CD8-positive, alpha-beta T cell (primary cell): ENCODE measurements at regions of chr12 and their contacts with region 1.

Region 1: GRCh38 chr12:121793838-121794533 is 498 bp upstream of the RHOF start:
- DNase-seq: peak; percentile 93 to 98 (median 95)
- ATAC-seq: peak; percentile 48
- H3K4me3 ChIP-seq: peak overlapping the region; percentile 93
- H3K4me3 Mint-ChIP-seq: peak overlapping the region; percentile 89
- H3K27ac ChIP-seq: peak overlapping the region; percentile 70 to 99
- H3K27ac Mint-ChIP-seq: peak overlapping the region; percentile 98
- H3K4me1 ChIP-seq: peaks cover 60% of the 10 kb centered on the region
- H3K4me1 Mint-ChIP-seq: peaks cover 66% of the 10 kb centered on the region
- H3K27me3 ChIP-seq: no peaks in the 10 kb centered on the region
- H3K27me3 Mint-ChIP-seq: no peaks in the 10 kb centered on the region
- CTCF ChIP-seq: peak; percentile 97

Region 2: GRCh38 chr12:121279507-121279915 is 514.5 kb before region 1 on chr12:
- CTCF ChIA-PET with region 1: no interaction called
- POLR2A ChIA-PET with region 1: no interaction called
- intact Hi-C with region 1: no loop called
- DNase-seq: no peak
- ATAC-seq: no peak
- H3K4me3 ChIP-seq: no peak overlapping the region
- H3K4me3 Mint-ChIP-seq: no peak overlapping the region
- H3K27ac ChIP-seq: no peak overlapping the region
- H3K27ac Mint-ChIP-seq: no peak overlapping the region
- H3K4me1 ChIP-seq: no peaks in the 10 kb centered on the region
- H3K4me1 Mint-ChIP-seq: no peaks in the 10 kb centered on the region
- H3K27me3 ChIP-seq: no peaks in the 10 kb centered on the region
- H3K27me3 Mint-ChIP-seq: no peaks in the 10 kb centered on the region
- CTCF ChIP-seq: no peak

Region 3: DNA sequence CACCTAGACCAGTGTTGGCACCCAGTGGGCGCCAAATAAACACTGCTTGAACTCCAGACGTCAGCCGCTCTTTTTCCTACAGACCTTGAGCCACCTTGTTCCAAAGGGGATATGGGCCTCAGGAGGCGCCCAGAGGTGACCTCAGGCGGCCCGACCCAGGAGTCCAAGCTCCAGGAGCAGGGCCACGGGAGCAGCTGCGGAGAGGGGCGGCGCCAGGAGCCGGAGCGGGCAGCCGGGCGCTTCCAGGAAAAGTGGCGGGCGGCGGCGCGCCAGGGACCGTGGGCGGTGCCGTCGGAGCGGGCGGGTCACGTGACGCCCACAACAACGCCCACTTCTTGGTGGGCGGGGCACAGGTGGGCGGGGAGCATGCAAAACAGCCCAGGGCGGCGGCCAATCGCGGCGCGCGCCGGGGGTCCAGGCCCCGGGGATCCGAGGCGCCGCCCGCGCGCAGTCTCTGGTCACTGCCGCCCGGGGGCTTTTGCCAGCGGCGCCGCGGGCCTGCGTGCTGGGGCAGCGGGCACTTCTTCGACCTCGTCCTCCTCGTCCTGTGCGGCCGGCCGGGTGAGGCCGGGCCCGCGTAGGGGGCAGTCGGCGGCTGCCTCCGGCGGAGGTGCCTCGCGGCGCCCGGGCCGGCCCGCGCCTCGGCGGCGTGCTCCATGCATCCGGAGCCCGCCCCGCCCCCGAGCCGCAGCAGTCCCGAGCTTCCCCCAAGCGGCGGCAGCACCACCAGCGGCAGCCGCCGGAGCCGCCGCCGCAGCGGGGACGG is 167.7 kb before region 1 on chr12 and contains the start of gene ORAI1:
- CTCF ChIA-PET with region 1: interaction called, 5 read pairs
- POLR2A ChIA-PET with region 1: interaction called, 8 read pairs
- intact Hi-C with region 1: loop called in 1 of 2 experiments (anchors 5 kb)
- DNase-seq: peak; percentile 91 to 98 (median 96)
- ATAC-seq: peak; percentile 67
- H3K4me3 ChIP-seq: peak within 1 kb of the TSS; percentile 69 to 70
- H3K4me3 Mint-ChIP-seq: peak within 1 kb of the TSS; percentile 94
- H3K27ac ChIP-seq: peak within 1 kb of the TSS; percentile 73 to 89
- H3K27ac Mint-ChIP-seq: peak within 1 kb of the TSS; percentile 97
- H3K4me1 ChIP-seq: peaks cover 44% of the 10 kb centered on the region
- H3K4me1 Mint-ChIP-seq: peaks cover 46% of the 10 kb centered on the region
- H3K27me3 ChIP-seq: no peaks in the 10 kb centered on the region
- H3K27me3 Mint-ChIP-seq: no peaks in the 10 kb centered on the region
- CTCF ChIP-seq: no peak
- total RNA-seq, gene ORAI1: 59.0 to 62.1 TPM

Region 4: DNA sequence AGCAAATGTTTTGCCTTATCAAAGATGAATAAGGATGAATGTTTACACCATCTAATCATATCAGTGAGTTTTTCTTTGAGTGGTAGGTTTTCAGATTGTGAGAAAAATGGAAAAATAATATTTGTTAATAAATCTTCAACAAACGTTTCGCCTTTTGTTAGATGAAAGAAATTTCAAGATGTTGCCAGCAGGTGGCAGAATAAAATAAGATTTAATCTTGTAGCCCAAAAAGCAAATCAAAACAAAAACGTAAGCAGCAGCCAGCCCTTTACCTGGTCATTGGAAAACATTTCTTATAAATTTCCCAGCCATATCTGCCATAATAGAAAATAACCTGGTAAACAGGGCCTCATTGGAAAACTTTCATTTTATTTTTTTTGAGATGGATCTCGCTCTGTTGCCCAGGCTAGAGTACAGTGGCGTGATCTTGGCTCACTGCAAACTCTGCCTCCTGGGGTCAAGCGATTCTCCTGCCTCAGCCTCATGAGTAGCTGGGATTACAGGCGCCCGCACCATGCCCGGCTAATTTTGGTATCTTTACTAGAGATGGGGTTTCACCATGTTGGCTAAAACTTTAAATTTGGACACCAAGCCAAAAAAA is 96.8 kb before region 1 on chr12:
- CTCF ChIA-PET with region 1: interaction called, 31 read pairs
- POLR2A ChIA-PET with region 1: interaction called, 5 read pairs
- intact Hi-C with region 1: loop called (anchors 1 kb)
- DNase-seq: peak in 4 of 9 experiments; percentile 18 to 76 (median 59)
- ATAC-seq: peak; percentile 51
- H3K4me3 ChIP-seq: no peak overlapping the region
- H3K4me3 Mint-ChIP-seq: no peak overlapping the region
- H3K27ac ChIP-seq: no peak overlapping the region
- H3K27ac Mint-ChIP-seq: no peak overlapping the region
- H3K4me1 ChIP-seq: no peaks in the 10 kb centered on the region
- H3K4me1 Mint-ChIP-seq: peaks cover 2% of the 10 kb centered on the region
- H3K27me3 ChIP-seq: no peaks in the 10 kb centered on the region
- H3K27me3 Mint-ChIP-seq: no peaks in the 10 kb centered on the region
- CTCF ChIP-seq: peak; percentile 68

Region 5: DNA sequence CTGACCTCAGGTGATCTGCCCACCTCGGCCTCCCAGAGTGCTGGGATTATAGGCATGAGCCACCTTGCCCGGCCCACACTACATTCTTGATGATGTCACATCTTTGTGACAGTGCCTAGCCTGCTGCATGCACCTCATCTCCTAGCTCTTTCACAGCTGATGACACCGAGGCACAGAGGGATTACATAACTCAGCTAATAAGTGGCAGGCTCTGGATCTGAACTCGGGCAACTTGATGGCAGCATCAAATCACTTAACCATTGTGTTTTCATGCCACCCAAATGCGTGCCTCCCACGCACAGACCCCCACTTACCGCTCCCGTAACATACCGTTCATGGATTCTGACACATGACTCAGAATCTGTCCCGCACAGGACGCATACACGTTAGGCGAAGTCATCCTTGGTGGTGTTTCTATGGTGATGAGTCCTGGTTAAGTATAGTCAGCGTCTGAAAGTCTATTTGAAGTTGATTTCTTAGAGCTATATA is 74.0 kb before region 1 on chr12:
- CTCF ChIA-PET with region 1: interaction called, 29 read pairs
- POLR2A ChIA-PET with region 1: no interaction called
- intact Hi-C with region 1: no loop called
- DNase-seq: no peak
- ATAC-seq: no peak
- H3K4me3 ChIP-seq: no peak overlapping the region
- H3K4me3 Mint-ChIP-seq: no peak overlapping the region
- H3K27ac ChIP-seq: no peak overlapping the region
- H3K27ac Mint-ChIP-seq: no peak overlapping the region
- H3K4me1 ChIP-seq: no peaks in the 10 kb centered on the region
- H3K4me1 Mint-ChIP-seq: peaks cover 10% of the 10 kb centered on the region
- H3K27me3 ChIP-seq: no peaks in the 10 kb centered on the region
- H3K27me3 Mint-ChIP-seq: no peaks in the 10 kb centered on the region
- CTCF ChIP-seq: no peak

Region 6: DNA sequence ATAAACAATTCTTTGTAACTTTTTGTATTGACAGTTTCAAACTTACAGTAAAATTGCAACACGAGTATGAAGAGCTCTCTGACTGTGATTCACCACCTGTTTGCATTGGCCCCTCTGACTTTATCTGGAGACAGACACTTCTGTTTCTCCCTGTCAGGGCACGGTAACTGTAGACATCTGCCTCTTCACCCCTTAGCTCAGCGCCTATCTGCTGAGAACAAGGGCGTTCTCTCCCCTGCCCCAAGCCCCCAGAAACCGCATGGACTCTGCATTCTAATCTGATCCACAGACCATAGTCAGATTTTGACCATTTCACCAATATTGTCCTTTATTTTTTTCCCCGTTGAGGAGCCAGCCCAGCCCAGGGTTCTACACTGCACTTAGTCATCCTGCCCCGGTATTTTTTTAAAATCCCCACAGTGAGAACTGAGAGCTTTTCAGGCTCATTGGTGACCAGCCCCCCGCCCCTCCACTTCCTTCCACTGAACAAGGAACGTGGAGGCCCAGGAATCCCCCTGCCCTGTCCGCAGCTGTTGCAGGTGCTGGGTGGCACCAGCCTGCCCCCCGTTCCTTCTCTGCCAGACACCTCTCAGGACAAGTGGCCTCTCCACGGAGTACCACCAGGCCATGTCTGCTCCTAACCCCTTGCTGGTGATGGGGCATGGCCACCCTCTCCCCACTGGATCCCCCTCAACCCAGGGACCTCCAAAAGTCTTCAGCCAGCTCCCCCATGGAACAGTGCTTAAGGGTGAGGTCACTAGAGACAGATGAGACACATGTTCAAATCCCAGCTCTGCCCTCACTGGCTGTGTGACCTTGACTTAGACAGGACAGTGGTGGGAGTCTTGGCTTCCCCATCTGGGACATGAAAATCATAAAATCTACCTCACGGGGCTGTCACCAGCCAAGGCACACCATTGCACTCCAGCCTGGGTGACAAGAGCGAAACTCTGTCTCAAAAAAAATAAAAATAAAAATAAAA is 11.7 kb before region 1 on chr12:
- CTCF ChIA-PET with region 1: interaction called, 2,042 read pairs
- POLR2A ChIA-PET with region 1: interaction called, 1,016 read pairs
- intact Hi-C with region 1: no loop called
- DNase-seq: peak in 4 of 9 experiments; percentile 56 to 80 (median 69)
- ATAC-seq: peak; percentile 53
- H3K4me3 ChIP-seq: peak overlapping the region; percentile 13 to 19
- H3K4me3 Mint-ChIP-seq: peak overlapping the region; percentile 75
- H3K27ac ChIP-seq: peak overlapping the region; percentile 34 to 76
- H3K27ac Mint-ChIP-seq: peak overlapping the region; percentile 97
- H3K4me1 ChIP-seq: peaks cover 67% of the 10 kb centered on the region
- H3K4me1 Mint-ChIP-seq: peaks cover 57% of the 10 kb centered on the region
- H3K27me3 ChIP-seq: no peaks in the 10 kb centered on the region
- H3K27me3 Mint-ChIP-seq: no peaks in the 10 kb centered on the region
- CTCF ChIP-seq: no peak

Region 7: DNA sequence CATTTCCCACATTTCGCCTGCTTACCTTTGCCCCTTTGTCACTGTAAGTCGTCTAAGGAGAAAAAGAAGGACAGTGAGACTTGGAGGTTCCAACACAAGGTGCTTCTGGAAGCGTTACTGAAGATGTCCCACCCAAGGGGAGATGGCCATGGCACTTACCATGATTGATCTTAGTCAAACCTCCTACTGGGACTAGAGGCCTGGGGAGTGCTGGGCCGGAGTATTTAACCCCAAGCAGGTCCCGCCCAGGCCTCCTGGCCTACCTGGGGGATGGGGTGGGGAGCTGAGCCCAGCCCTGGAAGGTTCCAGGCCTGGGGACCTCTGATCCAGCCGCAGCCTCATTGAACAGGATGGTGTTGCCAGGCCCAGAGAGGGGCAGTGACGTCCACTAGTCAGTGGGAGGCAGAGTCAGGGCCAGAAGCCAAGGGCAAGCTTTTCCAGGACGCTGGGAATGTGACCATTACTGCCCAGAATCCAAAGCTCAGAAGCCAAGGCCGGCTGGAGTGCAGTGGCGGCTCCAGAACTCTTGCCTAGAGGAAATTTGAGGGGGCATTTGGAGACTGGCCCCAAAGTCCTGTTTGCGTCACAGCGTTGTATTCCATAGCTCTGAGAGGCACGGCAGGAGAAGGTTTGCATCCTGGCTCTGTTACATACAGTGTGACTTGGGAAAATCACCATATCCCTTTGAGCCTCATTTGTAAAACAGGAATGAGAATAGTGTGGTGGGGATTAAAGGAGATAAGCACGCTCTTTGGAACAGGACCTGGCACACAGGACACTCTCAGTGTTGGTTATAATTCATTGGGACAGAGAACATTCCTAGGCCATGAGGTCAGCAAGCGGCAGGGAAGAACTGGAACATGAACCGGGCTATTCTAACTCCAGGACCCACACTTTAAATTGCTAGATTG is 64.9 kb after region 1 on chr12 and contains the start of gene HPD:
- CTCF ChIA-PET with region 1: no interaction called
- POLR2A ChIA-PET with region 1: no interaction called
- intact Hi-C with region 1: no loop called
- DNase-seq: no peak
- ATAC-seq: no peak
- H3K4me3 ChIP-seq: no peak within 1 kb of the TSS
- H3K4me3 Mint-ChIP-seq: no peak within 1 kb of the TSS
- H3K27ac ChIP-seq: no peak within 1 kb of the TSS
- H3K27ac Mint-ChIP-seq: no peak within 1 kb of the TSS
- H3K4me1 ChIP-seq: no peaks in the 10 kb centered on the region
- H3K4me1 Mint-ChIP-seq: no peaks in the 10 kb centered on the region
- H3K27me3 ChIP-seq: no peaks in the 10 kb centered on the region
- H3K27me3 Mint-ChIP-seq: no peaks in the 10 kb centered on the region
- CTCF ChIP-seq: no peak
- total RNA-seq, gene HPD: not detected

Region 8: GRCh38 chr12:121888478-121889266 is 94.7 kb after region 1 on chr12 and contains the start of gene PSMD9:
- CTCF ChIA-PET with region 1: interaction called, 39 read pairs
- POLR2A ChIA-PET with region 1: interaction called, 21 read pairs
- intact Hi-C with region 1: loop called (anchors 1 kb)
- DNase-seq: peak; percentile 96 to 99 (median 99)
- ATAC-seq: peak; percentile 93
- H3K4me3 ChIP-seq: peak within 1 kb of the TSS; percentile 72 to 80
- H3K4me3 Mint-ChIP-seq: peak within 1 kb of the TSS; percentile 99
- H3K27ac ChIP-seq: peak within 1 kb of the TSS; percentile 88 to 92
- H3K27ac Mint-ChIP-seq: peak within 1 kb of the TSS; percentile 99
- H3K4me1 ChIP-seq: peaks cover 32% of the 10 kb centered on the region
- H3K4me1 Mint-ChIP-seq: peaks cover 35% of the 10 kb centered on the region
- H3K27me3 ChIP-seq: no peaks in the 10 kb centered on the region
- H3K27me3 Mint-ChIP-seq: no peaks in the 10 kb centered on the region
- CTCF ChIP-seq: peak; percentile 27
- total RNA-seq, gene PSMD9: 38.7 to 42.2 TPM